ENCODE measurements at regions of chr1 and their contacts with region 1.

Region 1: DNA sequence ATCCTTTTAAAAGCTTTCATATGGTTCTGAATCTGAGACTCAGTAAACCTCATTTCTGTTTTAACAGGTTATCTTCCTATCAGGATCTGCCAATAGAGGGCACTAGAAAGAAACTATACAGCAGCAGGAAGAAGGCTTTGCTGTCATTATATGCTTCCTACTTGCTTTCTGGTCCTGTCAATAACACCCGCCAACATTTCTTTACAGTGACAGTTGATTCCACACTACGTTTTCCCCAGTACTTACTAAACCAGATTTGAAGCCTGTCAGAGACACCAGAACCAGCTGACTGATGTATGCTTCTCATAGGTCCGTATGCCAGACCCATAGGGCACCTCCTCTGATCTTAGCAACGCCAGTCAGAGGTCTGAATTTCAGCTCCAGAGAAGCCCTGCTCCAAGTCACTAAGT is 341.0 kb upstream of the NEGR1 start:
- DNase-seq: peak; percentile 70
- H3K4me3 ChIP-seq: no peak overlapping the region
- H3K27ac ChIP-seq: no peak overlapping the region
- H3K4me1 ChIP-seq: peaks cover 10% of the 10 kb centered on the region
- H3K27me3 ChIP-seq: no peaks in the 10 kb centered on the region
- CTCF ChIP-seq: peak; percentile 25 to 56
- POLR2A ChIP-seq: no peak

Region 2: GRCh38 chr1:72186733-72187307 is 436.5 kb before region 1 on chr1:
- CTCF ChIA-PET with region 1: interaction called, 4 read pairs
- POLR2A ChIA-PET with region 1: no interaction called
- dilution Hi-C with region 1: no loop called
- intact Hi-C with region 1: loop called (anchors 5 kb)
- DNase-seq: peak; percentile 51
- H3K4me3 ChIP-seq: no peak overlapping the region
- H3K27ac ChIP-seq: no peak overlapping the region
- H3K4me1 ChIP-seq: no peaks in the 10 kb centered on the region
- H3K27me3 ChIP-seq: no peaks in the 10 kb centered on the region
- CTCF ChIP-seq: peak; percentile 25 to 48
- POLR2A ChIP-seq: no peak

Region 3: DNA sequence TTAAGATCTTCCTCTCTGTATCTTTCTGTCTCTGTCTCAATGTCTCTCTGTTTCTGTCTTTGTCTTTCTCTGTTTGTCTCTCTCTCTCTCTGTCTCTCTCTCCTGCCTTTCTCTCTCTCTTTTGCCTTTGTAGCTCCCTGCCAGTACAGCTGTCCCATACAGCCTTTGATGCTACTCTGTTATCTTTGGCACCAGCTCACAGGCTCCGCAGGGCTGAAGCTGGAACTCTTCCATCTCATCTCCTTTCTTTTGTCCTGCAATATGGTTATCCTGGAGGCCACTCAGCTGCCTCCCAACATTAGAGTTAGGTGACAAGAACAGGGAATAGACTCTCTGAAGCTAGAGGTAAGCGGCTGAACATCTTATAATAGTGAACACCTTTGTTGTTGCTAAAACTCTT is 13.3 kb after region 1 on chr1:
- CTCF ChIA-PET with region 1: interaction called, 10 read pairs
- POLR2A ChIA-PET with region 1: no interaction called
- dilution Hi-C with region 1: no loop called
- intact Hi-C with region 1: no loop called
- DNase-seq: peak; percentile 80
- H3K4me3 ChIP-seq: no peak overlapping the region
- H3K27ac ChIP-seq: no peak overlapping the region
- H3K4me1 ChIP-seq: no peaks in the 10 kb centered on the region
- H3K27me3 ChIP-seq: no peaks in the 10 kb centered on the region
- CTCF ChIP-seq: no peak
- POLR2A ChIP-seq: no peak

Region 4: DNA sequence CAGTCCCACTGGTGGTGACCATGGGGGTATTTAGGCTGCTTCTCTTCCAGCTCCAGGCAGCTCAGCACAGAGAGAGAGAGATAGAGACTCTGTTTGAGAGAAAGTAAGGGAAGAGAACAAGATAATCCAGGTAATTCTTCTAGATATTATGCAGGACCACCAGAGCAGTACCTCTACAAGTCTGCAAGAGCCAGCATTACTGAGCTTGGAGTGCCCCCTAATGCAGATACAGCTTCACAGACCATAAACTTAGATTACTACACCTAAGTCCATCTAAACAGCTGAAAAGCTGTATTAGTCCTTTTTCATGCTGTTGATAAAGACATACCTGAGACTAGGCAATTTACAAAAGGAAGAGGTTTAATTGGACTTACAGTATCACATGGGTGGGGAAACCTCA is 1004.4 kb after region 1 on chr1:
- CTCF ChIA-PET with region 1: interaction called, 9 read pairs
- POLR2A ChIA-PET with region 1: no interaction called
- dilution Hi-C with region 1: no loop called
- intact Hi-C with region 1: loop called (anchors 5 kb)
- DNase-seq: peak; percentile 36
- H3K4me3 ChIP-seq: no peak overlapping the region
- H3K27ac ChIP-seq: no peak overlapping the region
- H3K4me1 ChIP-seq: no peaks in the 10 kb centered on the region
- H3K27me3 ChIP-seq: no peaks in the 10 kb centered on the region
- CTCF ChIP-seq: peak in 1 of 2 donors; percentile 19
- POLR2A ChIP-seq: no peak

Region 5: GRCh38 chr1:73998348-73998959 is 1375.2 kb after region 1 on chr1:
- CTCF ChIA-PET with region 1: no interaction called
- POLR2A ChIA-PET with region 1: no interaction called
- dilution Hi-C with region 1: no loop called
- intact Hi-C with region 1: loop called (anchors 5 kb)
- DNase-seq: peak; percentile 38
- H3K4me3 ChIP-seq: no peak overlapping the region
- H3K27ac ChIP-seq: no peak overlapping the region
- H3K4me1 ChIP-seq: no peaks in the 10 kb centered on the region
- H3K27me3 ChIP-seq: no peaks in the 10 kb centered on the region
- CTCF ChIP-seq: peak; percentile 7 to 11
- POLR2A ChIP-seq: no peak

Measured in endothelial cell of umbilical vein (primary cell).